Activated B cell treated with CpG ODN at 0.5 μM for 24 hours (primary cell): ENCODE measurements at regions of chrX and their contacts with region 1.

Region 1: GRCh38 chrX:119516157-119516702 is 48.0 kb downstream of the SLC25A5 start:
- DNase-seq: peak; percentile 18
- ATAC-seq: peak; percentile 96
- H3K4me3 Mint-ChIP-seq: no peak overlapping the region
- H3K27ac Mint-ChIP-seq: peak overlapping the region; percentile 26
- H3K4me1 Mint-ChIP-seq: peaks cover 4% of the 10 kb centered on the region
- H3K27me3 Mint-ChIP-seq: no peaks in the 10 kb centered on the region
- CTCF ChIP-seq: no peak

Region 2: DNA sequence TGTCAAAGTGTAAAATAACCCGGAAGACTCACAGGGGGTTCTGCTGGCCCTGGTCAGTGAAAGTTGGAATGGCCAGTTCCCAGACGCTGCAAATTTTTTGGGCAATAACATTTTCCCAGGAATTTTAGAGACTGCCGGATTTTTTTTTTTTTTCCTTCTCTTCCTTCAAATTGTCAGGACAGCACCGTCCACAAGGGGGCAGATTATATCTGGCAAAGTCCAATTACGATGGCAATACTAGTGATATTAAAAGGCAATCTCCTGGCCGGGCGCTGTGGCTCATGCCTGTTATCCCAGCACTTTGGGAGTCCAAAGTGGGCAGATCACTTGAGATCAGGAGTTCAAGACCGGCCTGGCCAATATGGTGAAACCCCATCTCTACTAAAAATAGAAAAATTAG is 27.5 kb before region 1 on chrX:
- CTCF ChIA-PET with region 1: interaction called, 10 read pairs
- POLR2A ChIA-PET with region 1: no interaction called
- intact Hi-C with region 1: loop called (anchors 2 kb)
- DNase-seq: no peak
- ATAC-seq: peak; percentile 37
- H3K4me3 Mint-ChIP-seq: no peak overlapping the region
- H3K27ac Mint-ChIP-seq: no peak overlapping the region
- H3K4me1 Mint-ChIP-seq: peaks cover 2% of the 10 kb centered on the region
- H3K27me3 Mint-ChIP-seq: no peaks in the 10 kb centered on the region
- CTCF ChIP-seq: no peak

Region 3: GRCh38 chrX:119729408-119730201 is 213.4 kb after region 1 on chrX:
- CTCF ChIA-PET with region 1: interaction called, 27 read pairs
- POLR2A ChIA-PET with region 1: interaction called, 3 read pairs
- intact Hi-C with region 1: loop called (anchors 1 kb)
- DNase-seq: peak; percentile 30
- ATAC-seq: peak; percentile 57
- H3K4me3 Mint-ChIP-seq: no peak overlapping the region
- H3K27ac Mint-ChIP-seq: no peak overlapping the region
- H3K4me1 Mint-ChIP-seq: peaks cover 2% of the 10 kb centered on the region
- H3K27me3 Mint-ChIP-seq: no peaks in the 10 kb centered on the region
- CTCF ChIP-seq: no peak

Region 4: GRCh38 chrX:119775517-119776238 is 259.4 kb after region 1 on chrX:
- CTCF ChIA-PET with region 1: interaction called, 9 read pairs
- POLR2A ChIA-PET with region 1: no interaction called
- intact Hi-C with region 1: loop called (anchors 1 kb)
- DNase-seq: no peak
- ATAC-seq: peak; percentile 21
- H3K4me3 Mint-ChIP-seq: peak overlapping the region; percentile 28
- H3K27ac Mint-ChIP-seq: peak overlapping the region; percentile 85
- H3K4me1 Mint-ChIP-seq: peaks cover 27% of the 10 kb centered on the region
- H3K27me3 Mint-ChIP-seq: no peaks in the 10 kb centered on the region
- CTCF ChIP-seq: no peak